Breast epithelium (tissue), 4 donors: ENCODE measurements at regions of chr14 and their contacts with region 1.

Region 1: DNA sequence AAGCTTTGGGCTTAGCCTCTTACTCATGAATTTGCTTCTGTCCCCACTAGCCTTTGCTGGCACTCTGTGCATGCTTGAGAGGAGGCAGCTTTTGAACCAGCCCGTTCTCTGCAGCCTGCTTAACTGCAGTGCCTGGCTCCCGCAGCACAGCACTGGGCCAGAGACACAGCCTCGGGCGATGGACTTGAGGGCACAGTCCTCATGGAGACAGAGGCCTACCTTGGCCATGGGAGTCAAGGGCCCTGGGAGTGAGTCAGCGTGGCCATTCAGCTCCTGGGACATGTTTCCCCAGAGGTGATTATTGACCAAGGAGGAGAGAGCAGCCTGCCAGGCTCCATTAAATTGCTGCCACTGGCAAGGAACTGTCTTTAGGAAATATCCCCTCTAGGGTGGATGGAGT is 93.5 kb downstream of the SMOC1 start:
- DNase-seq: no peak
- H3K4me3 ChIP-seq: no peak overlapping the region
- H3K27ac ChIP-seq: peak overlapping the region in 1 of 2 donors; percentile 41
- H3K4me1 ChIP-seq: no peaks in the 10 kb centered on the region
- H3K27me3 ChIP-seq: no peaks in the 10 kb centered on the region
- CTCF ChIP-seq: no peak
- POLR2A ChIP-seq: no peak

Region 2: DNA sequence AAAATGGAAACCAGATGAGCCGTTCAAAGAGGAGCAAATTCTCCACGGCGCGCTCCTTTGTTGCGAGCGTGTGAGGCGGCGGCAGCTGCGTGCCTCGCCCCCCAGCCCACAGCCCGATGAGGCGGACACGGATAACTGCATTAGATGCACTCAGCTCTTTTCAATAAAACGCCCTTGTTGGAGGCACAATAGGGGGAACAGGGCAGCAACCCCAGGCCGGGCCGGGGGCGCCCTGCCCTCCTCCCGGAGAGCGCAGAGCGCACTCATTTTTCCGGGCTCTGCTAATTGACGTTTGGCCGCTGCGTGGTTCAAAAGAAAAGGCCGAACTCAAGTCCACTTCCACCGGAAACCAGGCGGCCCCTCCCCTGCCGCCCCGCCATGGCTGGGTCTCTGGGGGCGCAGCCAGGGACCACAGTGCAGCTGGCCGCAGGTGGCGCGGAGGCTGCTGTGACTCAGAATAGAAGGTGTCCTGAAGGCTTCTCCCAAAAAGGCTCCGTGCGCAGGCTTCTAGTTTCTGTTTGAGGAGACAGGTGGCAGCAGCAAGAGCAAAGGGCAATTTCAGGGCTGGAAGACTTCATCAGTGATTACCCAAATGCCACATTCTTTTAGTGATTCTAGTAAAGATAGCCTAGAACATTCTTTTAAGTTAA is 122.5 kb before region 1 on chr14:
- intact Hi-C with region 1: no loop called
- DNase-seq: no peak
- H3K4me3 ChIP-seq: no peak overlapping the region
- H3K27ac ChIP-seq: no peak overlapping the region
- H3K4me1 ChIP-seq: no peaks in the 10 kb centered on the region
- H3K27me3 ChIP-seq: no peaks in the 10 kb centered on the region
- CTCF ChIP-seq: no peak
- POLR2A ChIP-seq: no peak

Region 3: DNA sequence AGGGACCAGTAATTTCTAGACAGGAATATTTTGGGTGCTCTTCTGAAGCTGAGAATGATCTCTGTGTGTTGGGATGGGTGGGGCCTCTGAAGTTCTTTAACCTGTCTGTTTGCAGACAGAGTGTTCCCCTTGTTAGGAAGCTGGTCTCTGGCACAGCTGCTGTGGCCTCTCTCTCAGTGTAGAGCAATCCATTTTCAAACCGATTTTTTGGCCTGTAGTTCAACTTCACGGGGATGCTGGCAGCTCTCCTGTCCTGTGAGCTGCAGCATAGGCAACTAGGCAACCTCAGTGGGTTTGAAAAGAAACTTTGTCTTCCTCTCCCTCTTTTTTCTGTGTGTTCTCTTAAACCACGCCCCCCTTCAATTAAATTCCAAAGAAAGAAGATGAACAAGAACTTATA is 24.4 kb before region 1 on chr14:
- intact Hi-C with region 1: loop called (anchors 1 kb)
- DNase-seq: no peak
- H3K4me3 ChIP-seq: no peak overlapping the region
- H3K27ac ChIP-seq: no peak overlapping the region
- H3K4me1 ChIP-seq: no peaks in the 10 kb centered on the region
- H3K27me3 ChIP-seq: no peaks in the 10 kb centered on the region
- CTCF ChIP-seq: no peak
- POLR2A ChIP-seq: no peak

Region 4: GRCh38 chr14:70780396-70781075 is 807.8 kb after region 1 on chr14:
- intact Hi-C with region 1: no loop called
- DNase-seq: no peak
- H3K4me3 ChIP-seq: no peak overlapping the region
- H3K27ac ChIP-seq: no peak overlapping the region
- H3K4me1 ChIP-seq: no peaks in the 10 kb centered on the region
- H3K27me3 ChIP-seq: no peaks in the 10 kb centered on the region
- CTCF ChIP-seq: no peak
- POLR2A ChIP-seq: no peak